CD8-positive, alpha-beta memory T cell (primary cell): ENCODE measurements at regions of chr3 and their contacts with region 1.

Region 1: DNA sequence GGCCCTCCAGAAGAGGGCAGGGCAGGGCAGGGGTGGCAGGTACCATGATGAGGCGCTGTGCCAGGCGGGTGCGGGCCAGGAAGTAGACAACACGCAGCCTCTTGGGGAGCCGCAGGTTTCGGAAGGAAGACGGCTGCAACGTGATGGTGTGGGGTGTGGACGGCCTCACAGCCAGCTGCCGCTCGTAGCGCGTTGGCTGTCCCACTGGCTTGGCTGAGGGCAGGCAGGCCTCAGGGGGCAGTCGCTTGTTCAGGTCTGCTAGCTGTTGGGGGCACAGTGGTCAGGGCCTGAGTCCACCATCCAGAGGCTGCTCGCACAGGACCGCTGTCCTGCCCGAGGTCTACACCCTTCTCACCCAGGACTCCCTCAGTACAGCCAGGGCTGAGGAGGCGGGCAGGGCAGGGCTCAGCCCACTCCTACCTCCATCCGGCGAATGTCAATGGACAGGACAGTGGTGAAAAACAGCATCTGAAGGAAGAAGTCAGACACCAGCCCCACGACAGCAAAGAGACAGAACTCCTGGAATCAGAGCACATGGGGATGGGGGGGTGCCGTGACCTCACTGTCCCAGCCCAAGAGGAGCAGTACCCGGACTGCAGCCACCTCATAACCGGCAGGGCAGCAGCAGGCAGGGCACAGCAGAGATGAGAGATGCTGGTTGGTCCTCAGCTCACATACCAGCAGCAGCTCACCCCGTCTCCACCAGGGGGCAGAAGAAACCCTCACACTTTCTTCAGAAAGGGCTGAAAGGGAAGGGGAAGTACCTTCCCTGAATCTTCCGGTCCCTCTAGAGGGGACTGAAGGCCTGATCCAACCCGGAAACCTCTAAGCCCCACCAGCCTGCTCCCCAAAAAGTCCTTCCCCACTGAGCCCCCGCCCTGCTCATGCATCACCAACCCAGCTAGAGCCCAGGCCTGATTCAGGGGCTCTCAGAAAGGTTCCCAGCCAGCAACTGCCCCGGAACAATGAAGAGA is 40.0 kb downstream of the PTPN23 start:
- DNase-seq: peak; percentile 77 to 90 (median 82)
- H3K4me3 ChIP-seq: no peak overlapping the region
- H3K4me3 Mint-ChIP-seq: peak overlapping the region in 6 of 7 donors; percentile 66 to 83 (median 78)
- H3K27ac ChIP-seq: peak overlapping the region; percentile 49
- H3K27ac Mint-ChIP-seq: peak overlapping the region; percentile 91 to 99 (median 99)
- H3K4me1 ChIP-seq: peaks cover 15% of the 10 kb centered on the region
- H3K4me1 Mint-ChIP-seq: peaks cover 11 to 24% (median 11%) of the 10 kb centered on the region in 3 donors
- H3K27me3 ChIP-seq: no peaks in the 10 kb centered on the region
- H3K27me3 Mint-ChIP-seq: peaks cover 0 to 2% of the 10 kb centered on the region in 2 donors

Region 2: DNA sequence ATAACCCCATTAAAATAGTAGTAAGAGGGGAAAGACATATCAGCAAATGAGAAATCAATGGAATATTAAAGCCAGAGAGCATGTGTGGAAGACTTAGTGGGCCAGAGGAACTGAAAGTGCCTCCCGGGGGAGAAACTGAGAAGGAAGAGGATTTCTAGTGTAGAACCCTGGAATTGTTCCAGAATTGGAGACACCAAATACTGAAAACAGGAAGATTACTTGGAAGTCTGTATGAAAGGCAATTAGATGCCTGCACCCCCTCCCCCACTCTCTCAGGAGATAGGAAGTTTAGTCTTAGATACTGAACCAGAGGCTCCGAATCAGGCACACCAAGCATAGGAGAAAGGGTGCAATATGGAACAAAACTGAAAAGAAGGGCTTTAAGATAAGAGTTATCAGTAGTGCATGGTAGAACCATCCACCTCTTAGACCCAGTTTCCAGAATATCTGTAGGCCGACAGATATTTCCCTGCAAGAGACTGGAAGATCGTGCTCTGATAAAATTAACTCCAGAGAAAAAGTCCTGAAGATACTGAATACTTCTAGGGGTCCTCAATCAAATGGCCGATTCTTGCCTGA is 105.6 kb before region 1 on chr3:
- CTCF ChIA-PET with region 1: no interaction called
- POLR2A ChIA-PET with region 1: no interaction called
- DNase-seq: no peak
- H3K4me3 ChIP-seq: no peak overlapping the region
- H3K4me3 Mint-ChIP-seq: no peak overlapping the region
- H3K27ac ChIP-seq: peak overlapping the region; percentile 34
- H3K27ac Mint-ChIP-seq: peak overlapping the region in 3 of 8 donors; percentile 5 to 80 (median 34)
- H3K4me1 ChIP-seq: no peaks in the 10 kb centered on the region
- H3K4me1 Mint-ChIP-seq: peaks cover 10 to 21% (median 20%) of the 10 kb centered on the region in 3 donors
- H3K27me3 ChIP-seq: no peaks in the 10 kb centered on the region
- H3K27me3 Mint-ChIP-seq: no peaks in the 10 kb centered on the region

Region 3: GRCh38 chr3:47409688-47410416 is 10.9 kb before region 1 on chr3:
- CTCF ChIA-PET with region 1: interaction called, 15 read pairs
- POLR2A ChIA-PET with region 1: no interaction called
- DNase-seq: no peak
- H3K4me3 ChIP-seq: no peak overlapping the region
- H3K4me3 Mint-ChIP-seq: no peak overlapping the region
- H3K27ac ChIP-seq: no peak overlapping the region
- H3K27ac Mint-ChIP-seq: no peak overlapping the region
- H3K4me1 ChIP-seq: no peaks in the 10 kb centered on the region
- H3K4me1 Mint-ChIP-seq: no peaks in the 10 kb centered on the region
- H3K27me3 ChIP-seq: no peaks in the 10 kb centered on the region
- H3K27me3 Mint-ChIP-seq: no peaks in the 10 kb centered on the region

Region 4: GRCh38 chr3:47475570-47476329 is 55.0 kb after region 1 on chr3 and contains the start of gene SCAP:
- CTCF ChIA-PET with region 1: interaction called, 43 read pairs
- POLR2A ChIA-PET with region 1: interaction called, 4 read pairs
- DNase-seq: peak; percentile 94 to 96 (median 94)
- H3K4me3 ChIP-seq: peak within 1 kb of the TSS; percentile 73
- H3K4me3 Mint-ChIP-seq: peak within 1 kb of the TSS; percentile 85 to 96 (median 91)
- H3K27ac ChIP-seq: peak within 1 kb of the TSS; percentile 87
- H3K27ac Mint-ChIP-seq: peak within 1 kb of the TSS; percentile 88 to 98 (median 94)
- H3K4me1 ChIP-seq: peaks cover 33% of the 10 kb centered on the region
- H3K4me1 Mint-ChIP-seq: peaks cover 30 to 50% (median 38%) of the 10 kb centered on the region in 3 donors
- H3K27me3 ChIP-seq: no peaks in the 10 kb centered on the region
- H3K27me3 Mint-ChIP-seq: no peaks in the 10 kb centered on the region
- total RNA-seq, gene SCAP: 66.4 to 73.4 TPM

Region 5: DNA sequence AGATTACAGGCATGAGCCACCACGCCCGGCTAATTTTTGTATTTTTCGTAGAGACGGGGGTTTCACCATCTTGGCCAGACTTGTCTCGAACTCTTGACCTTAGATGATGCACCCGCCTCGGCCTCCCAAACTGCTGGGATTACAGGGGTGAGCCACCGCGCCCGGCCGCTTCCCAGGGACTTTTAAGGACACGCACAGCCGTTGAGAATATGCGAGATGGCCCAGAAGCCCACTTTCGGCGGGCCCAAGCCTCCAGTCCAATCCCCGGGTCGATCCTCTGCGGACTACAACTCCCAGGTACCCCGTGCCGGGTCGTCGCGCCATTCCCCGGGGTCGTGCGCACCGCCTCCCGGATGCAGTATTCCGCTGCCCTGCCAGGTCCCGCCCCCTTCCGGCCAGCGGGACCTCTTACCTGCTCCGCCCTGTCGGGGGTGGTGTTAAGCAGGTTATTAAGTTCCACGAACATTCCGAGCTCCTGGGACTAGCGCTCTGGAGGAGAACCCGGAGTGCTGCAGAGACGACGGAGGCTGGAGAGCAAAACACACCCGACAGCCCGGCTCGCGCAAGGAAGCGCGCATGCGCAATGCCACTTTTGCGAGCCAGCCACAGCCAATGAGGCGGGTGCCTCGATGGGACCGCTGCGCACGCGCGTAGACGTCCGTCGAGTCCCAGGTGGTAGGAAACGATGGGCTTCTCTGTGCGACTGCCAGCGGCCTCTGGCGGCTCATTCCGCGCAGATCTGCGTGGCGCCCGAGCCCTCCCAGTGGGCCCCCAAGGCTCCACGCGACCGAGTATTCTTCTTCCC is 92.5 kb after region 1 on chr3 and contains the start of gene ELP6:
- CTCF ChIA-PET with region 1: interaction called, 10 read pairs
- POLR2A ChIA-PET with region 1: no interaction called
- DNase-seq: peak; percentile 95 to 99 (median 99)
- H3K4me3 ChIP-seq: peak within 1 kb of the TSS; percentile 100
- H3K4me3 Mint-ChIP-seq: peak within 1 kb of the TSS; percentile 94 to 99 (median 97)
- H3K27ac ChIP-seq: peak within 1 kb of the TSS; percentile 95
- H3K27ac Mint-ChIP-seq: peak within 1 kb of the TSS; percentile 95 to 99 (median 98)
- H3K4me1 ChIP-seq: peaks cover 15% of the 10 kb centered on the region
- H3K4me1 Mint-ChIP-seq: peaks cover 23 to 31% (median 24%) of the 10 kb centered on the region in 3 donors
- H3K27me3 ChIP-seq: no peaks in the 10 kb centered on the region
- H3K27me3 Mint-ChIP-seq: peaks cover 3% of the 10 kb centered on the region in 2 donors
- total RNA-seq, gene ELP6: 45.7 to 47.1 TPM

Region 6: GRCh38 chr3:47646362-47646761 is 225.6 kb after region 1 on chr3:
- CTCF ChIA-PET with region 1: no interaction called
- POLR2A ChIA-PET with region 1: no interaction called
- DNase-seq: no peak
- H3K4me3 ChIP-seq: no peak overlapping the region
- H3K4me3 Mint-ChIP-seq: no peak overlapping the region
- H3K27ac ChIP-seq: no peak overlapping the region
- H3K27ac Mint-ChIP-seq: peak overlapping the region in 3 of 8 donors; percentile 3 to 67 (median 25)
- H3K4me1 ChIP-seq: no peaks in the 10 kb centered on the region
- H3K4me1 Mint-ChIP-seq: peaks cover 0 to 6% (median 6%) of the 10 kb centered on the region in 3 donors
- H3K27me3 ChIP-seq: no peaks in the 10 kb centered on the region
- H3K27me3 Mint-ChIP-seq: peaks cover 0 to 1% of the 10 kb centered on the region in 2 donors